Dendritic cell treated with granulocyte-macrophage colony-stimulating factor and Interleukin-4, amounts not matched to agents 40 ng/mL and 50 ng/mL, for 4 days (primary cell): ENCODE measurements at regions of chr5 and their contacts with region 1.

Region 1: GRCh38 chr5:111530298-111530740 is 18.0 kb upstream of the STARD4 start:
- H3K4me3 Mint-ChIP-seq: peak overlapping the region; percentile 18
- H3K27ac Mint-ChIP-seq: peak overlapping the region; percentile 82
- H3K4me1 Mint-ChIP-seq: peaks cover 18% of the 10 kb centered on the region
- H3K27me3 Mint-ChIP-seq: no peaks in the 10 kb centered on the region

Region 2: GRCh38 chr5:110195288-110195687 is 1335.0 kb before region 1 on chr5:
- intact Hi-C with region 1: no loop called
- H3K4me3 Mint-ChIP-seq: no peak overlapping the region
- H3K27ac Mint-ChIP-seq: no peak overlapping the region
- H3K4me1 Mint-ChIP-seq: no peaks in the 10 kb centered on the region
- H3K27me3 Mint-ChIP-seq: no peaks in the 10 kb centered on the region

Region 3: DNA sequence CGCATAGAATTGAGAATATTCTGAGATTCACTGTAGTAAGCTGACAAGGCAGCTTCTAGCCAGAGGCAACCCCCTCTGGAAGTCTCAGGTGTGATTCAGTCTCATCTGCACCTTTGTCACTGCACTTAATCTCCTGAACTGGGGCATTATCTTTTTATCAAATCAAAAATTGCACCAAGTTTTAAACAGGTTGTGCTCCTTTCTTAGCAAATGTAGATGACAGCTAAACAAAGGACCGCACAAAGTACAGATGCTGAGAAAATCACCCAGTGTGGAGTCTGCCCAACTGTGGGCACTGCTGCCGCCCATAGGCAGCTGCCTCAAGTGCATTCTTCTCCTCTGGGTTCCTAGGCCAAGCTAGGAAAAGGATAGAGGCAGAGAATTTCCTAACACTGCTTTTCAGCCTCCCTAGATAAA is 69.1 kb before region 1 on chr5:
- intact Hi-C with region 1: no loop called
- H3K4me3 Mint-ChIP-seq: no peak overlapping the region
- H3K27ac Mint-ChIP-seq: no peak overlapping the region
- H3K4me1 Mint-ChIP-seq: peaks cover 8% of the 10 kb centered on the region
- H3K27me3 Mint-ChIP-seq: peaks cover 3% of the 10 kb centered on the region

Region 4: GRCh38 chr5:111512375-111513130 is 17.8 kb before region 1 on chr5 and contains the start of gene STARD4:
- intact Hi-C with region 1: loop called (anchors 2 kb)
- H3K4me3 Mint-ChIP-seq: peak within 1 kb of the TSS; percentile 97
- H3K27ac Mint-ChIP-seq: peak within 1 kb of the TSS; percentile 96
- H3K4me1 Mint-ChIP-seq: peaks cover 31% of the 10 kb centered on the region
- H3K27me3 Mint-ChIP-seq: no peaks in the 10 kb centered on the region